ENCODE measurements at regions of chr1 and their contacts with region 1.

Region 1: GRCh38 chr1:205150651-205151428 is 29.1 kb upstream of the RBBP5 start:
- DNase-seq: no peak
- H3K27ac ChIP-seq: no peak overlapping the region
- CTCF ChIP-seq: no peak

Region 2: DNA sequence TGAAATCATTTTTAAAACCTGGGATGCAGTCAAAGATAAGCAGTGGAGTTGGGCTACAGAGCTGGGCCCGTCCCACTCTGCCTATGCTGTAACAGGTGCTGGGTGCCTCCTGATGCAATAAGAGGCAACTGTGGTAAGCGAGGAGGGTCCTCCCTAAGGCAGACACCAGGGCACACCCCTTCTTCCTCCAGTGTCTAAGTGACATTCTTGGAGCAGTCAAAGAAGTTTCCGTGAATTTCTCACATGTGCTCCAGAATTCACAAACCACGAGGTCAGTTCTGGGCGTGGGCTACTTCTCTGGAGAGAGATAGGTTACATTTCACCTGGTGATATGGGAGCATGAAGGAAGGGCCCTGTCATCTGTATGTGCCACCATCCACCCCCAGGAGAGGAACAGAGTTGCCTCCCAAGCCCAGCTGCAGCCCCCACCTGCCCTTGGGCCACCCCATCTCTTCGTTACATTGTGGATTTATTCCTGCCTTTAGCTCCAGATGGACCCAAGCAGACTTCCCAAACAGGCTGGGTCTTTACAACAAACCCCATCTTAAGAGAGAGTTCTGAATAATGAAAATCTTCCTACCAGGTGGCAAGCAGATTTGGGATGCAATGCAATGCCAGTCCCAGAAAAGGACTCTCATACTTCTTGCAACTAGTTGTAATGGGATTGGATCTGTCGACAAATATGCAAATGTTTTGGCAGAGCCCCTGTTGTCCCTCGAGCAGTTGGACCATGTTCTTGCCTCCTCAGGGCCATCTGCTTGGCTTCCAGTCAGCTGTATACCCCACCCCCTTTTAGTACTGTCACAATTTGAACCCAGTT is 190.3 kb before region 1 on chr1:
- CTCF ChIA-PET with region 1: interaction called, 10 read pairs
- POLR2A ChIA-PET with region 1: no interaction called
- DNase-seq: no peak
- H3K27ac ChIP-seq: no peak overlapping the region
- CTCF ChIP-seq: no peak

Region 3: DNA sequence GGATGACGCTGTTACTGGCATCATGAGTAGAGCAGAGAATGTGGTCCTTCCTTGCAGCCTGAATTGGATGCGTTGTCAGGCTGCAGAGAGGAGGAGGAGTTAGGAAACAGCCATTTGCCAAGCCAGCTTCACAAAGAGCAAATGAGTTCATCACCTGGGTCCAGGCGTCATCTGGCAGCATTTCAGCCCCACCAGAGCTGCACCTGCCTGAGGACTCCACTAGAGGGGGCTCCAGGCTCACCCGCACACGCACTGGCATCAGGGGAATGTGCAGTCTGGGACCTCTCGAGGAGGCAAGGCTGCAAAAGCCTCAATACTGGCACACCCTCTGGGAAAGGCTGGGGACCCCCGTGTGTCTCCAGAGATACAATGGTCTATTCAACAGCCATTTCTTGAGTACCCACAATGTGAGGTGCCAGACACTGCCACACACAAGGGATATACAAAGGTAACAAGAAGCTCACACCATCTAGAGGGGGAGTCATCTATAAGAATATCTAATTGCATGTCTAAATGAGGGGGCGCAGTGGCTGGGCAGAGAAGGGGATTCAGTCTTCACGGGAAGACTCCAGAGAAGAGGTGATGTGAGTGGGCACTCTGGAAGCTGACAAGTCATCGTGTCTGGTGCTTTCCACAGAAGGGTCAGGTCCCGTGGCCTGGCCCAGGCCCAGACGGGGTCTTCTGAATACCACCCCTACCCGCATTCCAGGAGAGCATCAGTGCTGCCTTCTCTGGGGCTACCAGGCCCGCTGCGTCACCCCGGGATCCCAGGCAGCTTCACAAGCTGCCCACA is 161.4 kb before region 1 on chr1:
- CTCF ChIA-PET with region 1: no interaction called
- POLR2A ChIA-PET with region 1: no interaction called
- DNase-seq: peak; percentile 95
- H3K27ac ChIP-seq: no peak overlapping the region
- CTCF ChIP-seq: peak; percentile 78